ENCODE measurements at regions of chrX and their contacts with region 1.

Region 1: DNA sequence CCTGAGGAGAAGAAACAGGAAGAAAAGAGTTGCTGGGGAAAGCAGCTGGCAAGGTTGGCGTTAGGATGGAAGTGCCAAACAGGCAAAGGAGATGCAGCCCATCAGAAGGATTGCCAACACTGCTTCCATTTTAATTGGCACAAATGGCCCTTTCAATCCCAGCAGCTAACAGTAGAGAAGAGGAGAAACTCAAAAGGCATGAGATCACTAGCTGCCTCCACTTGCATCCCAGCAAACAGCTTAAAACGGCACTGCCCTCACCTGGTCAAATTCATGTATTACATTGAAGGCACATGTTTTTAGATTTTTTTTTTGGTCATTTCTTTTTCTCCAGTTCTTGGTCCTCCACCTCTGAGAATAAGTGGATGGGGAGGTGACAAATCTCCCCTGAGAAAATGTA is 14.9 kb upstream of the LOC101059915 start:
- DNase-seq: peak; percentile 28
- H3K4me3 Mint-ChIP-seq: no peak overlapping the region
- H3K27ac Mint-ChIP-seq: no peak overlapping the region
- H3K4me1 Mint-ChIP-seq: peaks cover 28% of the 10 kb centered on the region
- H3K27me3 Mint-ChIP-seq: peaks cover 7% of the 10 kb centered on the region

Region 2: GRCh38 chrX:70970482-70970995 is 681.9 kb before region 1 on chrX:
- intact Hi-C with region 1: loop called (anchors 5 kb)
- DNase-seq: no peak
- H3K4me3 Mint-ChIP-seq: no peak overlapping the region
- H3K27ac Mint-ChIP-seq: no peak overlapping the region
- H3K4me1 Mint-ChIP-seq: peaks cover 6% of the 10 kb centered on the region
- H3K27me3 Mint-ChIP-seq: peaks cover 8% of the 10 kb centered on the region

Region 3: GRCh38 chrX:71400710-71401109 is 251.7 kb before region 1 on chrX:
- intact Hi-C with region 1: loop called (anchors 5 kb)
- DNase-seq: no peak
- H3K4me3 Mint-ChIP-seq: no peak overlapping the region
- H3K27ac Mint-ChIP-seq: no peak overlapping the region
- H3K4me1 Mint-ChIP-seq: peaks cover 4% of the 10 kb centered on the region
- H3K27me3 Mint-ChIP-seq: no peaks in the 10 kb centered on the region

Region 4: DNA sequence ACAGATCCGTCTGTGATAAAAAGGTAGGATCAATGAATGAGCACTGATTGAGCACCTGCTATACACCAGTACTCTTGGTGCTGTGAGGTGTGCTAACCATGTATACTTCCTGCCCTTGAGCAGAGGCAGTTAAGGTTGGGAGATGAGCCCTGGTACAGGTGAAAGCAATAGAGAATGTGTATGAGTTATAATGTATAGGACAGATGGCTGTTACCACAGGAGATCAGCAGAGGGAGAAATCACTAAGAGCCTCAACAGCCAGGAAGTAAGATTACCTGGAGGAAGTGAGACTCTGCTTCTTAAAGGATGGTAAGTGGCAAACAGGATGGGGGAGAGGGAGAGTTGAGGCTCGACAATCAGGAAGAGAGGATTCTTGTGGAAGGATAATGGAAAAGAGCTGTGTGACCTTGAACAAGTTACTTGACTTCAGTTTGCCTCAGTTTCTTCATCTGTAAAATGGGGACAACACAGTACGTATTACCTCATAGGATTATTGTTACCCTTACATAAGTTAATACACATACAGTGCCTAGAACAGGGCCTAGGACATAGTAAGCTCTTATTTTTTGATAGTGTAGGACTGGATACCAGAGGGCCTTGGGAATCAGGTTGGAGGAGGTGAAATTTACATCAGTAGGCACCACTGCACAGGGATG is 43.2 kb before region 1 on chrX:
- intact Hi-C with region 1: loop called (anchors 1 kb)
- DNase-seq: no peak
- H3K4me3 Mint-ChIP-seq: no peak overlapping the region
- H3K27ac Mint-ChIP-seq: peak overlapping the region; percentile 83
- H3K4me1 Mint-ChIP-seq: peaks cover 67% of the 10 kb centered on the region
- H3K27me3 Mint-ChIP-seq: no peaks in the 10 kb centered on the region

Measured in activated T-helper 1 cell treated with anti-CD3 and anti-CD28 coated beads, Interleukin-12 subunit alpha, Interleukin-12 subunit beta, Interleukin-2, Interleukin-4 antibody, amounts not matched to agents 30 ng/mL and 10 ng/mL and 1 ng/mL, durations not matched to agents 14 hours and 24 hours and 36 hours (primary cell).